Colonic mucosa (tissue), 4 donors: ENCODE measurements at regions of chr1 and their contacts with region 1.

Region 1: GRCh38 chr1:68120136-68120791 is 69.8 kb upstream of the DIRAS3 start:
- DNase-seq: peak; percentile 76
- H3K4me3 ChIP-seq: no peak overlapping the region
- H3K27ac ChIP-seq: no peak overlapping the region
- H3K4me1 ChIP-seq: no peaks in the 10 kb centered on the region
- H3K27me3 ChIP-seq: no peaks in the 10 kb centered on the region
- CTCF ChIP-seq: peak; percentile 58

Region 2: DNA sequence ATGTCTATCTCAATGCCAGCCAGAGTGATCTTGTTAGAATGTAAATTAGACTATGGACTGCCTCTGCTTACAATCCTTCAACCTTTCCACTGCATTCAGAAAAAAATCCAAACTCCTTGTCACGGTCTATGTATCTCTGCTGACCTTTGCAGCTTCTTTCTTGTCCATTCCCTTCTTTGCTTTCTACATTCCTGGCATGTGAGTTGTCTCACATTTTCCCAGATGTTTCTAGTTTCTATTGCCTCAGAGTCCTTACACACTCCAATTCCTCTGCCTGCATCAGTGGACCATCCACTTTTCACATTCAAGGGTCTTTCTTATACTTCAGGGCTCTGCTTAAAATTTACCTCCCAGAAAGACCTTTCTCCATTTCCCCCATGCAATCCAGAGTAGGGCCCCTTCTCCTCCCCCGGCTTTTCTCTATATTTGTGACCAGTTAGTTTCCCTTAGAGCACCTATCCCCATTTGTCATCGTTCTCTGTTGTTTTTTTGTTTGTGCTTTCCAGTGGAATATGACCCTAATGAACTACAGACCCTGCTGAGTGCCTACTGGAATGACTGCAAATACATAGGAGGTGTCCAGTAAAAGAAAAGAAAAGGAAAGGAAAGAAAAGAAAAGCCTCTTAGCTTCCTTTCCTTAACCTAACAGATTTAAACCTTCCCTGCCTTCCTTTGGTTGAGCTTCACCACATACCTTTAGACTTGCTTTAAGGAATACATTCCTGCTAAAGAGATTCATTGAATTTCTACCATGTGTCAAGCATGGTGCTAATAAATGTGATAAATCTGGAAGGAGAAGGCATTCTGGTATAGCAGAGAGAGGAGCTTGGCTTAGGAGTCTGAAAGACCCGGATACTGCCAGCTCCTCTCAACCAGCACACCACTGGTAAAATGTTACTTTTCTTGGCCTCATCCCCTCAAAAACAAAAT is 171.8 kb before region 1 on chr1:
- intact Hi-C with region 1: no loop called
- DNase-seq: no peak
- H3K4me3 ChIP-seq: no peak overlapping the region
- H3K27ac ChIP-seq: no peak overlapping the region
- H3K4me1 ChIP-seq: no peaks in the 10 kb centered on the region
- H3K27me3 ChIP-seq: no peaks in the 10 kb centered on the region
- CTCF ChIP-seq: no peak

Region 3: GRCh38 chr1:68173911-68174737 is 53.9 kb after region 1 on chr1:
- intact Hi-C with region 1: no loop called
- DNase-seq: peak; percentile 69
- H3K4me3 ChIP-seq: no peak overlapping the region
- H3K27ac ChIP-seq: peak overlapping the region; percentile 64
- H3K4me1 ChIP-seq: peaks cover 15% of the 10 kb centered on the region
- H3K27me3 ChIP-seq: no peaks in the 10 kb centered on the region
- CTCF ChIP-seq: no peak

Region 4: DNA sequence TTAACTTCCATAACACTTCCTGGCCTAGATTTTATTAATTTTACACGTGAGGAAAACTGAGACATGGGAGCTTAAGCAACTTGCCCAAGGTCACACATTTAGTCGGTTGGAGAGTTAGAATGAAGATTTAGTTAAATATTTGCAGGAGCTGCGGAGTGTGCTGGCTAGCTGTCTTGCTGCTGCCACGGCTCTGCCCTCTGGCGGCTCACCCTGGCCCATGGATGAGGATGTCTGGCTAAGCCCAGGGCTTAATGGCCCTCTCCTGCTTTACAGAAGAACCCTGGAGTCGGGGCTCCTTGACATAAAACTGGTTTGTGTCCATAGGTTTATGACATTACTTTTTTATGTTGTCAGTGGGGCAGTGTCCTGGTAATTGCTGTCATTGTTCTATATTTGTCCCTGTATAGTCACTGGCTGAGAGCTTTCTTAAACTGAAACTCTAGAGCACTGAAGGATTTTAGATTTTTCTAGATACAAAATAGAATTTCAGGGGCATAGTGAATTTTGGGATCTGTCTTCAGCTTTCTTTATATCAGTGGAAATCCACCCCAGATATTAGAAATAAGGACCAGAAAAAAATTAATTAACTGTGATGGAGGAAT is 200.9 kb after region 1 on chr1:
- intact Hi-C with region 1: loop called (anchors 1 kb)
- DNase-seq: peak; percentile 71
- H3K4me3 ChIP-seq: no peak overlapping the region
- H3K27ac ChIP-seq: no peak overlapping the region
- H3K4me1 ChIP-seq: no peaks in the 10 kb centered on the region
- H3K27me3 ChIP-seq: no peaks in the 10 kb centered on the region
- CTCF ChIP-seq: peak; percentile 73

Region 5: DNA sequence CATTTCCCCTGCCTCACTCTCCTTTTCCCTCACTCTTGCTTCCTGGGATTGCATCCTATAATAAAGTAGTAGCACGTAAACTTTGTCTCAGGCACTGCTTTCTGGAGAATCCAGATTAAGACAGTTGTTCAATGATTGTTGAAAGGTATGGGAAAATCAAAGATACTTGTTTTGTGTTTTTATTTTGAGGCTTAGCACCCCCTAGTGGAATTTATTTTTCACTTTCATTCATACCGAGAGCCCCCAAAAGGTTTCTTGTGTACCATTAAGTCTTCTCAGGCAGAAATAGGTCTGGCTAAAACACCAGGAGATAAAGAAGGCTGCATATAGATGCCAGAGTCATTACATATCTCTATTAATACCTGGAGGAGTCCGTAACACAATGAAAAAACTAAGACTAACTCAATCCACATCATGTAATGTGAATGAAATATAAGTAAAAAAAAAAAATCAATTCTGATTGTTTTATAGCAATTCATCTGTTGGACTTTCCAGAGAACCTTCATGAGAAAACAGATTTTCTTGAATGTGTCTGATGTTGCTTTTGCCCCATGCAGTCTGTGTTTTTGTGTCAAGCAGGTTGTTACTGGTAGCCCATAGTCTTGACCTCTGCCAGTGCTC is 226.0 kb after region 1 on chr1:
- intact Hi-C with region 1: loop called (anchors 5 kb)
- DNase-seq: no peak
- H3K4me3 ChIP-seq: no peak overlapping the region
- H3K27ac ChIP-seq: no peak overlapping the region
- H3K4me1 ChIP-seq: no peaks in the 10 kb centered on the region
- H3K27me3 ChIP-seq: no peaks in the 10 kb centered on the region
- CTCF ChIP-seq: peak; percentile 45

Region 6: GRCh38 chr1:68442822-68443556 is 322.7 kb after region 1 on chr1:
- intact Hi-C with region 1: loop called (anchors 5 kb)
- DNase-seq: peak; percentile 19
- H3K4me3 ChIP-seq: no peak overlapping the region
- H3K27ac ChIP-seq: no peak overlapping the region
- H3K4me1 ChIP-seq: no peaks in the 10 kb centered on the region
- H3K27me3 ChIP-seq: no peaks in the 10 kb centered on the region
- CTCF ChIP-seq: peak; percentile 46